Activated T-helper 2 cell treated with anti-CD3 and anti-CD28 coated beads, Interferon-gamma antibody, Interleukin-2, Interleukin-4, amounts not matched to agents 10 μg/mL and 5 μg/mL and 100 μg/mL, durations not matched to agents 14 hours and 24 hours and 36 hours (primary cell): ENCODE measurements at regions of chr19 and their contacts with region 1.

Region 1: DNA sequence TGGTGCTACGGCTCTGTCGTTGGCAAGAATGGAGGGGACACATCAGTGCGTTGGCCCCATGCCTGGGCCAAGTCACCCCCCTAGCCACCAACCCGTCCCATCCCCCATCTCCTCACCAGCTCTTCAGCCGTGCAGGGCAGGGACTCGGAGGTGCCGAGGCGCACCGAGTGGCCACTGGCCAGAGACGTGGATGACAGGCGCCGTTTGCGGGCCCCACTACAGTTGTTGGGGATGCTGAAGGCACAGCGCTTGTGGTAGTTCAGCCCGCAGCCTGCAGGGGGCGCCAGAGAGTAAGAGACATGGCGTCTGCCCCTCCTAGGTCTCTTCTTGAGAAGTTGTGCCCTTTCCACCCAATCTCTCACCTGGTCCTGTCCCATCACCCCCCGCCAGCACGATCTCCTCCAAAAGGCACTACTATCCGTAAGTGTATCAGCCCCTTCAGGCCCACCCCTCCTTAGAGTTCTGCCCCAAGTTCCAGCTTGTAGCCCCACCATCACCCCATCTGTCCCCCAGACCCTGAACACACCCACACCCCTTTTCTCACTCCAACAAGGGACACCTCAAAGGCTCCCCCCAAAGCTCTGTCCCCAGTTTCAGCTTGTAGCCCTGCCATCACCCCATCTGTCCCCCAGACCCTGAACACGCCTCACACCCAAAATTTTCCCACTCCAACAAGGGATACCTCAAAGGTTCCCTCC is 12.4 kb downstream of the PRKD2 start:
- DNase-seq: peak; percentile 77
- H3K4me3 Mint-ChIP-seq: no peak overlapping the region
- H3K27ac Mint-ChIP-seq: peak overlapping the region; percentile 53
- H3K4me1 Mint-ChIP-seq: peaks cover 6% of the 10 kb centered on the region
- H3K27me3 Mint-ChIP-seq: no peaks in the 10 kb centered on the region

Region 2: GRCh38 chr19:46728693-46729676 is 24.5 kb after region 1 on chr19:
- intact Hi-C with region 1: loop called (anchors 1 kb)
- DNase-seq: peak; percentile 68
- H3K4me3 Mint-ChIP-seq: no peak overlapping the region
- H3K27ac Mint-ChIP-seq: no peak overlapping the region
- H3K4me1 Mint-ChIP-seq: peaks cover 22% of the 10 kb centered on the region
- H3K27me3 Mint-ChIP-seq: no peaks in the 10 kb centered on the region